ENCODE measurements at regions of chrX and their contacts with region 1.

Region 1: DNA sequence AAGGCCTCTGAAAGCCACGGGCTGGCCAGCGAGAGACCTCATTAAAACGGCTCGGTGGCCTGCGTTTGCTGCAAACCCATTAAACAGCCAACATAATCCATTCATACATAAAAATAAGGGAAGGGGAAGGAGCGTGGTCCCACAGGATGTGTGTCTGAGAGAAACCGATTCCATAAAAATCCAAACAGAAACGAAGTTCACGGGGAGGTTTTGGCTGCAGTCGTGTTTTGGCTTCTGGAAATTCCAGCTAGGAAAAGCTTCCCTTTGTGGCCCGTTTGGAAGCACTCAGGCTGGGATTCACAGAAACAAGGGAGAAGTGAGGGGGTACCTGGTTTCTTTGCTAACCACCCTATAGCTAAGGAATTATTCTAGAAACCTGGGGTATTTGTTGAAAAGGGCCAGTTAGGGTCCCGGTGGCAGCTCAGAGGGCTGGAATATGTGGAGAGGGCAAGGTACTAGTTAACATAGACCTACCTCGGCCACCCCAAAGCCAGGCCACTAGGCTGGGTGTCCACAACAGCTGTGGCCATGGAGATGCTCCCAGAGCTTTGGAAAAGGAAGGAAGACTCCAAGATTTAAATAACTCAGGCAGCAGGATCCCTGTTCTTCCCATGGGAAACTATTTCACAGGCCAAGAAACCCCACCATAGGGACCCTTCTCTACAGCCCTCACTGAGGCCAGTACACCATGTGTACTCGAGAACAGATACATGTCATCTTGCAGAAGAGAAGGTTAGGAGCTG is 166.8 kb downstream of the BCOR start:
- DNase-seq: no peak

Region 2: DNA sequence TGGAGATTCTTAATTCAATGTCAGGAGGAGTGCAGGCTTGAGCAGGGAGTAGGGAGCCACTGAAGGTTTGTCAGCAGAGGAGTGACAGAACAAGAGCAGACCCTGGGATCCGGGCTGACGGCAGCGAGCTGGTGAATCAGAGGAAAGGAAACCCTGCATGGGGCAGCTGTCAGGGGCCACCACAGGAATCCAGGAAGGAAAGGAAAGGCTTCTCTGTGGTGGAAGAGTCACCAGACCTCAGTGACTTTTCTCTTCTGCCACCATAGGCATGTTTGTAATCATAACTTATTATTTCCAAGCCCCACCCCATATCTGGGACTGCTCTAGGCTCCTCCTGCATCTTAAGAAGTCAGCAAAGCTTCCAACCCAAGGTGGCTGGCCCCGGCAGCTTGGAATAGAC is 15.9 kb after region 1 on chrX:
- intact Hi-C with region 1: loop called in 1 of 2 experiments (anchors 1 kb)
- DNase-seq: peak; percentile 52